Activated CD4-positive, alpha-beta T cell treated with anti-CD3 and anti-CD28 coated beads for 36 hours (primary cell): ENCODE measurements at regions of chr7 and their contacts with region 1.

Region 1: GRCh38 chr7:2519119-2519930 is at the start of gene LFNG:
- DNase-seq: peak; percentile 91
- ATAC-seq: peak; percentile 75
- H3K4me3 Mint-ChIP-seq: peak within 1 kb of the TSS; percentile 89
- H3K27ac Mint-ChIP-seq: peak within 1 kb of the TSS; percentile 73
- H3K4me1 Mint-ChIP-seq: peaks cover 32% of the 10 kb centered on the region
- H3K27me3 Mint-ChIP-seq: no peaks in the 10 kb centered on the region
- total RNA-seq, gene LFNG: 14.9 to 23.3 TPM

Region 2: GRCh38 chr7:1159891-1160668 is 1359.2 kb before region 1 on chr7 and contains the start of gene ZFAND2A:
- CTCF ChIA-PET with region 1: no interaction called
- POLR2A ChIA-PET with region 1: no interaction called
- intact Hi-C with region 1: loop called in 1 of 2 experiments (anchors 5 kb)
- DNase-seq: peak; percentile 99
- ATAC-seq: peak; percentile 98
- H3K4me3 Mint-ChIP-seq: peak within 1 kb of the TSS; percentile 84
- H3K27ac Mint-ChIP-seq: peak within 1 kb of the TSS; percentile 90
- H3K4me1 Mint-ChIP-seq: peaks cover 22% of the 10 kb centered on the region
- H3K27me3 Mint-ChIP-seq: no peaks in the 10 kb centered on the region
- total RNA-seq, gene ZFAND2A: 21.6 to 25.2 TPM

Region 3: DNA sequence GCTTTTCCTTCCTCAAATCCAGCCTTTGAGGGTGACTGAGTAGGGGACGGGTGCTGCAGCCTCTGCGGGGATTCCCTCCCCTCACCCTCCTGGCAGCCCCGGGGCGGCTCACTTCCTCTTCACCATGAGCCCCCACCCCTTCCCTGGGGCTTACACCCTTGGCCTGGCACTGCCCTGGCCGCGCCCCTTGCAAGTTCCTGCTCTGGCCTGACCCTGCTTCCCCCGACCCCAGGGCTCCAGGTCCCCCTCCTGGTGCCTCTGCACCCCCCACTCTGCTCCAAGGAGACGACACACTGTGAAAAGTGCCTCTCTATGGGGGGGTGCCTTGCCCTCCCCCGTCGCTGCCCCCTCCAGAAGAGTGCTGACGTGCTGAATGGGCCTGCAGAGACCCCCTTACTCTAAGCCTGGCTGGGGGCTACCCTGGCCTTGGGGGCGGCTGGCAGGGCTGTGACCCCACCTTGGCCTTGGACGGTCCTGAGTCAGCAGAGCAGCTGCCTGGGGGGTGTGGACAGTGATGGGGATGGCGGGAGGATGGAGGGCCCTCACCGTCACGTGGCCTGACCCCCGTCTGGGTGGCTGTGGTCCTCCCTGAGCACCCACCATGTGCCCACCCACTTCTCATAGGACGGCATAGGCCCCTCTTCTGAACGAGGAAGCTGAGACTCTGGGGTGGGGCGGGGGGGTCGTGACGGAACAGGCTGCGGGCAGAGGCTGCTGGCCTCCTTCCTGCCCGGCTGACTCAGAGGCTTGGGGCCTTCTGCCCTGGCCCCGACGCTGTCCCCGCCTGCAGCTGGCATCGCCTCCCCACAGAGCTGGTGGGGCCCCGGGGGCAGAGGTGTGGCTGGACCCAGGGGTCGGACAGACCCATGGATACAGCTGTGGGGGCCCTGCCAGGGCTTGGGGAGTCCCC is 10.1 kb after region 1 on chr7:
- CTCF ChIA-PET with region 1: no interaction called
- POLR2A ChIA-PET with region 1: interaction called, 4 read pairs
- intact Hi-C with region 1: loop called in 1 of 2 experiments (anchors 1 kb)
- DNase-seq: peak; percentile 79
- ATAC-seq: peak; percentile 58
- H3K4me3 Mint-ChIP-seq: peak overlapping the region; percentile 61
- H3K27ac Mint-ChIP-seq: peak overlapping the region; percentile 94
- H3K4me1 Mint-ChIP-seq: peaks cover 47% of the 10 kb centered on the region
- H3K27me3 Mint-ChIP-seq: no peaks in the 10 kb centered on the region

Region 4: GRCh38 chr7:2632733-2633537 is 113.6 kb after region 1 on chr7:
- CTCF ChIA-PET with region 1: interaction called, 3 read pairs
- POLR2A ChIA-PET with region 1: no interaction called
- intact Hi-C with region 1: loop called (anchors 1 to 5 kb)
- DNase-seq: peak; percentile 77
- ATAC-seq: peak; percentile 7
- H3K4me3 Mint-ChIP-seq: peak overlapping the region; percentile 91
- H3K27ac Mint-ChIP-seq: peak overlapping the region; percentile 84
- H3K4me1 Mint-ChIP-seq: peaks cover 14% of the 10 kb centered on the region
- H3K27me3 Mint-ChIP-seq: no peaks in the 10 kb centered on the region